Mucosa of descending colon (tissue), 3 donors: ENCODE measurements at regions of chr6 and their contacts with region 1.

Region 1: GRCh38 chr6:13908955-13909381 is 15.8 kb upstream of the RNF182 start:
- DNase-seq: peak in 1 of 3 donors; percentile 29
- ATAC-seq: peak; percentile 73
- H3K4me3 ChIP-seq: no peak overlapping the region
- H3K4me1 ChIP-seq: no peaks in the 10 kb centered on the region
- CTCF ChIP-seq: peak; percentile 44

Region 2: GRCh38 chr6:14046476-14047068 is 137.6 kb after region 1 on chr6:
- intact Hi-C with region 1: loop called in 1 of 2 experiments (anchors 10 kb)
- DNase-seq: peak in 1 of 3 donors; percentile 62
- ATAC-seq: peak; percentile 74
- H3K4me3 ChIP-seq: no peak overlapping the region
- H3K4me1 ChIP-seq: no peaks in the 10 kb centered on the region
- CTCF ChIP-seq: peak; percentile 55

Region 3: GRCh38 chr6:14066782-14067406 is 157.9 kb after region 1 on chr6:
- intact Hi-C with region 1: loop called in 1 of 2 experiments (anchors 10 kb)
- DNase-seq: peak in 1 of 3 donors; percentile 22
- ATAC-seq: peak; percentile 81
- H3K4me3 ChIP-seq: no peak overlapping the region
- H3K4me1 ChIP-seq: no peaks in the 10 kb centered on the region
- CTCF ChIP-seq: peak; percentile 10

Region 4: DNA sequence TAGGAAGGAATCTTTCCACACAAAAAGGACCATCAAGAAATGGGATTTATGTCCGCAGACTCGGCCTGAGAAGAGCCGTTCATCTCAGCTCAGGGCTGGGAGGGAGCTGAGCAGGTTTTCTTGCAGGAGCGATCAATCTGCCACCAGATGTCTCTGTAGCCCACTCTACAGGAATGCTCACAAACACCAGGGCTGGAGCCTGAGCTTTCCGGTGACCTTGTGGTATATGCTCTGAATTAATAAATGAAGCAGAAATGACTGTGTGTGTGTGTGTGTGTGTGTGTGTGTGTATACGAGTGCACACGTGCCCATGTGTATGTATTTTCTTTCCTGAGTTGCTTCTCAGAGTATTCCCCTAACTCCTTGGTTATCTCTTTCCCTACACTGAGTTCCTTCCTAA is 220.6 kb after region 1 on chr6:
- intact Hi-C with region 1: no loop called
- DNase-seq: peak in 2 of 3 donors; percentile 48 to 66
- ATAC-seq: peak; percentile 88
- H3K4me3 ChIP-seq: no peak overlapping the region
- H3K4me1 ChIP-seq: no peaks in the 10 kb centered on the region
- CTCF ChIP-seq: peak; percentile 12